Right cardiac atrium (tissue), 5 donors: ENCODE measurements at regions of chr4 and their contacts with region 1.

Region 1: GRCh38 chr4:118981839-118982381 is 93.3 kb downstream of the SYNPO2 start:
- DNase-seq: peak in 2 of 3 donors; percentile 41 to 55
- ATAC-seq: peak; percentile 74 to 83
- H3K4me3 ChIP-seq: no peak overlapping the region
- H3K27ac ChIP-seq: no peak overlapping the region
- H3K4me1 ChIP-seq: peaks cover 14% of the 10 kb centered on the region
- H3K27me3 ChIP-seq: no peaks in the 10 kb centered on the region

Region 2: GRCh38 chr4:118927974-118928373 is 53.9 kb before region 1 on chr4:
- intact Hi-C with region 1: no loop called
- DNase-seq: peak; percentile 55 to 87 (median 73)
- ATAC-seq: peak; percentile 66 to 80
- H3K4me3 ChIP-seq: no peak overlapping the region
- H3K27ac ChIP-seq: no peak overlapping the region
- H3K4me1 ChIP-seq: peaks cover 6% of the 10 kb centered on the region
- H3K27me3 ChIP-seq: no peaks in the 10 kb centered on the region

Region 3: DNA sequence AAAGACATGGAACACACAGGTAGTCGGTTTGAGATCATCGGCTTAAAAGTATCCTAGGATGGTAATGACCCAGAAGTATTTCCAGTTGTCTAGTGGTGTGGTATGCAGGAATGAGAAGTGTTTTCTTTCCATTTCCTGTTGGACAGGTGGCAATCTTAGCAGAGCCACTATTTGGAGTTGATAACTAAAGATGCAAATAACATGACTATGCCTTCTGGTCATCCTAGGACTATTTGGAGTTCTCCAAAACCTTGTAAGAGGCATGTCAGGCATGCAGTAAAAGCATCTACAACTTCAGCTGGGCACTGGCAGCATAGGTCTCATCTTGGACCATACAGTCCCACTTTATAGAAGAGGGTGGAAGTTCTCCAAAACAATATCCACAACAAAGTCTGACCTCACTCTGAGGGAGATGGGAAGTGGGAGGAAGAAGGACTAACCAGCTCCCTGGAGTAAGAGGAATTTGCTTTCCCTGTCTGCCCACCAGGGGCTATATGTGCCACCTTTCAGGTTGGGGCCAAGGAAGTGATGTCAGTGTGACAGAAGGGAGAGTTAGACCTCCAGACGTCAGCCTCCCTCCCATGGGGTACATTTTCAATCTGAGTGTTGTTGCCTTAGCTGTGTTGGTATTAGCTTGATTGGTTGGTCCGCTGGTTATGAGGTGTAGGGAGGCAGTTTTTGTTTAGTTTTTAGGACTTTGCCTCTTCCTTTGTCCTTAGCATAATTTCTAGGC is 52.5 kb after region 1 on chr4:
- intact Hi-C with region 1: loop called in 1 of 4 experiments (anchors 5 kb)
- DNase-seq: no peak
- ATAC-seq: no peak
- H3K4me3 ChIP-seq: no peak overlapping the region
- H3K27ac ChIP-seq: no peak overlapping the region
- H3K4me1 ChIP-seq: peaks cover 1% of the 10 kb centered on the region
- H3K27me3 ChIP-seq: no peaks in the 10 kb centered on the region

Region 4: GRCh38 chr4:119099227-119099801 is 117.4 kb after region 1 on chr4:
- intact Hi-C with region 1: no loop called
- DNase-seq: no peak
- ATAC-seq: peak in 1 of 2 donors; percentile 18
- H3K4me3 ChIP-seq: no peak overlapping the region
- H3K27ac ChIP-seq: no peak overlapping the region
- H3K4me1 ChIP-seq: peaks cover 2% of the 10 kb centered on the region
- H3K27me3 ChIP-seq: no peaks in the 10 kb centered on the region

Region 5: DNA sequence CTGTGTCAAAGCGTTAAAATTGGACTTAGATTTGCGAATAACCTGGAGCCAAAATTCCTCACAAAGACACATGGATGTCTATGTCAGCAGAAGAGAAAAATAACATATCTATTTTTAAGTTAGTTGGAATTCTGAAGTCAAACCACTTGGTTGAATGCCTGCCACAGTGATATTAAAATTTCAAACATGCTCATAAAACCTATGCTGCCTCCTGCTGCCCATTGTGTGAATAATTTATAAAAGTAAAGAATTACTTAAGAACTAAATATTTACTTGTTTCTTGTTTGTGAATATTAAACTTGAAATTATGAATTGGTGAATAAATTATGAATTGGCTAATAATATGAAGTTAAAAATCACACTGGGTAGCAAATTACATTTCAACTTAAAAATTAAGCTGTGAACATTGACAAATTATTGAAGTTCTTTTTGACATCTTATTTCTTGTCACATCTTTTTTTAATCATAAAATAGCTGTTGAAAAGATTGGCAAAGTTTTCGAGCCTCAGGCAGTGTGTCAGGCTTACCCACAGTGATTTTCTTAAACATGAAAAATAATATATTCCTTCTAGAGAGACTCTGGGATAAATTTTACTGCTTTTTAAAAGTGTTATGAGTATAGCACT is 304.6 kb after region 1 on chr4:
- intact Hi-C with region 1: loop called (anchors 5 kb)
- DNase-seq: peak in 1 of 3 donors; percentile 30
- ATAC-seq: peak in 1 of 2 donors; percentile 54
- H3K4me3 ChIP-seq: no peak overlapping the region
- H3K27ac ChIP-seq: no peak overlapping the region
- H3K4me1 ChIP-seq: no peaks in the 10 kb centered on the region
- H3K27me3 ChIP-seq: no peaks in the 10 kb centered on the region